ENCODE measurements at regions of chr16 and their contacts with region 1.

Region 1: GRCh38 chr16:1363501-1364041 is 11.8 kb downstream of the GNPTG start:
- DNase-seq: peak; percentile 72
- ATAC-seq: peak; percentile 96
- H3K4me3 Mint-ChIP-seq: no peak overlapping the region
- H3K27ac Mint-ChIP-seq: no peak overlapping the region
- H3K4me1 Mint-ChIP-seq: peaks cover 3% of the 10 kb centered on the region
- H3K27me3 Mint-ChIP-seq: no peaks in the 10 kb centered on the region
- CTCF ChIP-seq: no peak

Region 2: DNA sequence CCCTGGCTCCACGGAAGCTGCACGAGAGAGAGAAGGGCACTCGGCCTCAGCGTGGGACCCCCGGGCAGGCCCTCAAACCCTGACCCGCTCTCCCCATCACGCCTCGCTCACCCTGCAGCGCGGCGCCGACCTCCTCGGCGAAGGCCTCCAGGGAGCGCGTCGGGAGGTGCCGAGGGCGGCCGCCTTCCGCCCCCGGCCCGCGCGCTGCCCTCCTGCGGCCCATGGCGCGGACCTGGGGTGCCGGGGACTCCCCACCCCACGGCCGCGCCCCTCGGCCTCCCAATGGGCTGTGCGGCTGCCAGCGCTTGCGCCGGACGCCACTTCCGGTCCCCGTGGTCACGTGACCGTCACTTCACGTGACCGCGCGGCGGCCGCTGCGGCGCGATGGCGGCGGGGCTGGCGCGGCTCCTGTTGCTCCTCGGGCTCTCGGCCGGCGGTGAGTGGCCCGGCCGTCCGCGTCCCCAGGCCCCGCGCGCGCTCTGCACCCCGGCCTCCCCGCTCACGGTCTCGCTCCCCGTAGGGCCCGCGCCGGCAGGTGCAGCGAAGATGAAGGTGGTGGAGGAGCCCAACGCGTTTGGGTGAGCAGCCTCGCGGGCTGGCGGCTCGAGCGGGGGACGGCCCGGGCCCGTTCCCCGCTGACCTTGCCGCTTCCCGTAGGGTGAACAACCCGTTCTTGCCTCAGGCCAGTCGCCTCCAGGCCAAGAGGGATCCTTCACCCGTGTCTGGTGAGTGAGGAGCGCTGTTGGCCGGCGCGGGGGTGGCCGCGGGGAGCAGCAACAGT is 11.8 kb before region 1 on chr16 and contains the starts of genes GNPTG and TSR3:
- CTCF ChIA-PET with region 1: interaction called, 10 read pairs
- POLR2A ChIA-PET with region 1: interaction called, 5 read pairs
- intact Hi-C with region 1: loop called (anchors 1 kb)
- DNase-seq: peak; percentile 92
- ATAC-seq: peak; percentile 93
- H3K4me3 Mint-ChIP-seq: peak within 1 kb of the TSS; percentile 85
- H3K27ac Mint-ChIP-seq: peak within 1 kb of the TSS; percentile 77
- H3K4me1 Mint-ChIP-seq: peaks cover 30% of the 10 kb centered on the region
- H3K27me3 Mint-ChIP-seq: no peaks in the 10 kb centered on the region
- CTCF ChIP-seq: no peak
- total RNA-seq, gene GNPTG: 36.3 and 40.2 TPM in 2 replicates
- total RNA-seq, gene TSR3: 45.3 and 49.0 TPM in 2 replicates

Region 3: GRCh38 chr16:1378804-1379303 is 15.3 kb after region 1 on chr16:
- CTCF ChIA-PET with region 1: interaction called, 12 read pairs
- POLR2A ChIA-PET with region 1: interaction called, 4 read pairs
- intact Hi-C with region 1: no loop called
- DNase-seq: no peak
- ATAC-seq: peak; percentile 77
- H3K4me3 Mint-ChIP-seq: peak overlapping the region; percentile 80
- H3K27ac Mint-ChIP-seq: peak overlapping the region; percentile 78
- H3K4me1 Mint-ChIP-seq: peaks cover 14% of the 10 kb centered on the region
- H3K27me3 Mint-ChIP-seq: no peaks in the 10 kb centered on the region
- CTCF ChIP-seq: no peak

Region 4: DNA sequence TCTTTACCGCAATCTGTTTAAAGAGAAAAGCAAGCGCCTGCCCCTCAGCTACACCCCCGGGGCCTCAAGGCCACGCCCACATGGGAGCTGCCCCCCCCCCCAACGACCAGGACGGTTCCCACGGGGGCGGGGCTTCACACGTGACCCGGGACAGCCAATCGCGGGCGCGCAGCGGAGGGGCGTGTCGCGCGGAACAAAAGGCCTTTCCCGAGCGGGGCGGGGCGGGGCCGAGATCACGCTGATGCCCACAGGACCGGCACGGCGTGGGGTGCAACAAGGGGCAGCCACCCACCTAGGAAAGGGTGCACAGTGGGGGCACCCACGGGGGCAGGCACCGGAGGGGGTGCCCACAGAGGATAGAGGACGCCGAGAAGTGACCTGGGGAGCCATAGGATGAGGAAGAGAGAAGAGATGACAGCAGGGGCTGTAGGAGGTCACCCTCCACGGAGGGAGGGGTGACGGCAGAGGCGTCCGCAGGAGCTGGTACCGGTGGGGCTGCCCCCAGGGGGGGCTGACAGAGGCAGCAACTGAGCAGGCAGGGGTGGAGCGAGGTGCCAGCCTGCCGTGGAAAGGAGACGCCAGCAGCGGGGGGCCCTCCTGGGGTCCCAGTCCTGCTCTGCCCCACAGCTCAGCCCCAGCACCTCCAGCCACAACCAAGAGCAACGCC is 44.7 kb after region 1 on chr16:
- CTCF ChIA-PET with region 1: interaction called, 5 read pairs
- POLR2A ChIA-PET with region 1: no interaction called
- intact Hi-C with region 1: loop called (anchors 1 kb)
- DNase-seq: peak; percentile 98
- ATAC-seq: peak; percentile 94
- H3K4me3 Mint-ChIP-seq: peak overlapping the region; percentile 80
- H3K27ac Mint-ChIP-seq: peak overlapping the region; percentile 56
- H3K4me1 Mint-ChIP-seq: peaks cover 30% of the 10 kb centered on the region
- H3K27me3 Mint-ChIP-seq: no peaks in the 10 kb centered on the region
- CTCF ChIP-seq: no peak

Region 5: DNA sequence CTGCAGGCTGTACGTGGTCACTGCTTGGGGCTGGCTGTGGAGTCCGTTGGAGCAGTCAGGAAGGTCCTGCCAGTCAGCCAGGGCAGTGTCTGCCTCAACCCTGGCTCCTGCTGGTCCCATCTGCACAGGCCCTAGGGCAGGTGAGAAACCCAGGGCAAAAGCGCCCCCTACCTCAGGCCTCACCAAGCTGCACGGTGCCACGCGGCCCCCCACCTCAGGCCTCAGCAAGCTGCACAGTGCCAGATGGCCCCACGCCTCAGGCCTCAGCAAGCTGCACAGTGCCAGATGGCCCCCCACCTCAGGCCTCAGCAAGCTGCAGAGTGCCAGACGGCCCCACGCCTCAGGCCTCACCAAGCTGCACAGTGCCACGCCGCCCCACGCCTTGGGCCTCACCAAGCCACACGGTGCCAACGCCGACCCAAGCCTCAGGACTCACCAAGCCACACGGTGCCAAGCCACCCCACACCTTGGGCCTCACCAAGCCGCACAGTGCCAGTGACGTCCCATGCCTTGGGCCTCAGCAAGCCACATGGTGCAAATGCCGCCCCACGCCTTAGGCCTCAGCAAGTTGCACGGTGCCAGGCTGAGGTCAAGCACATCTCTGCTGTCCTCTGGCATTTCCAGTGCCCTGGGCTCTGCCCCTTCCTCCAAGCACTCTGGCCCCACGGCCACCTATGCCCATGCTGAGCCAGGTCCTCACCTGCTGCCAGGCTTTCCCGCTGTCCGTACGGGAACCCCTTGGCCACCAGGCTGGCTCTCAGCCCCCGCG is 175.4 kb after region 1 on chr16:
- CTCF ChIA-PET with region 1: interaction called, 14 read pairs
- POLR2A ChIA-PET with region 1: interaction called, 5 read pairs
- intact Hi-C with region 1: loop called (anchors 1 kb)
- DNase-seq: no peak
- ATAC-seq: peak; percentile 67
- H3K4me3 Mint-ChIP-seq: no peak overlapping the region
- H3K27ac Mint-ChIP-seq: no peak overlapping the region
- H3K4me1 Mint-ChIP-seq: peaks cover 26% of the 10 kb centered on the region
- H3K27me3 Mint-ChIP-seq: no peaks in the 10 kb centered on the region
- CTCF ChIP-seq: no peak

Region 6: GRCh38 chr16:1564325-1564724 is 200.8 kb after region 1 on chr16:
- CTCF ChIA-PET with region 1: interaction called, 4 read pairs
- POLR2A ChIA-PET with region 1: no interaction called
- intact Hi-C with region 1: loop called (anchors 1 kb)
- DNase-seq: no peak
- ATAC-seq: no peak
- H3K4me3 Mint-ChIP-seq: no peak overlapping the region
- H3K27ac Mint-ChIP-seq: no peak overlapping the region
- H3K4me1 Mint-ChIP-seq: no peaks in the 10 kb centered on the region
- H3K27me3 Mint-ChIP-seq: no peaks in the 10 kb centered on the region
- CTCF ChIP-seq: no peak